ENCODE measurements at regions of chr11 and their contacts with region 1.

Region 1: DNA sequence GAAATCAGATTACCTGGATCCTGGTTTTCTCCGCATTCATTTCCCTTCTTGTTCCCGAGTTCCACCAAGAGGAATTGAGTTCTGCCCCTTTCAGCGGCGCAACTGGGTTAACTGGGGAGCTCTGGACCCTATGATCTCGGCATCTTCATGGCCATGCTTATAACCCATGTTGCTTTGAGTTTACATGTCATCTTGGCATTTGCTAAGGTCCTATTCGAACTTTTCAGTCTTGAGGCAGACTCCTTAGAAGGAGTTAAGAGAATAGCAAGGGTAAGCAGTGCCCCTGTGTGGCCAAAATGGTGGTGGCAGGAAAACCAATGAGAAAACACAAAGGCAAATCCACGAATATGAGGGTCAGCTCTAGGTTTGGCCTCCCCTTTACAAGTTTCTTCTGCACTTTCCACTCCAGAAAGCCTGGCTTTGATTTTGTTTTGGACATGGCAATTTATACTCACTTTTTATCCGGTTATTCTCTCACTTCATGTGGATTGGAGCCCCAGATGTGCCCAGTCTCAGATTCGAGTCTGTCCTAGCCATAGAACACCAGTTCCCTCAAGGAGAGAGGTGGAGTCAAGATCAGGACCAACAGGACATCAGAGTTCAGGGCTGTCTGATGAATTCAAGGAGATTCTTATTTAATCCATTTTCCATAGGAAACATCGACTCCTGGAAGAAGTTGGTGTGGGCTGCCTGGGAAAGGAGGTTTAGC is 55.3 kb upstream of the FBXO3 start:
- DNase-seq: no peak
- H3K4me3 ChIP-seq: peak overlapping the region; percentile 48 to 58 (median 54)
- H3K27ac ChIP-seq: no peak overlapping the region
- H3K4me1 ChIP-seq: peaks cover 7 to 16% (median 10%) of the 10 kb centered on the region in 4 donors
- H3K27me3 ChIP-seq: peaks cover 0 to 79% (median 16%) of the 10 kb centered on the region in 4 donors
- CTCF ChIP-seq: peak; percentile 70 to 83 (median 79)
- EP300 ChIP-seq: no peak
- POLR2A ChIP-seq: no peak

Region 2: GRCh38 chr11:33808228-33808828 is 21.3 kb before region 1 on chr11:
- intact Hi-C with region 1: loop called (anchors 2 kb)
- DNase-seq: no peak
- H3K4me3 ChIP-seq: no peak overlapping the region
- H3K27ac ChIP-seq: no peak overlapping the region
- H3K4me1 ChIP-seq: no peaks in the 10 kb centered on the region
- H3K27me3 ChIP-seq: peaks cover 0 to 6% (median 0%) of the 10 kb centered on the region in 4 donors
- CTCF ChIP-seq: peak; percentile 87 to 94 (median 90)
- EP300 ChIP-seq: no peak
- POLR2A ChIP-seq: no peak

Region 3: DNA sequence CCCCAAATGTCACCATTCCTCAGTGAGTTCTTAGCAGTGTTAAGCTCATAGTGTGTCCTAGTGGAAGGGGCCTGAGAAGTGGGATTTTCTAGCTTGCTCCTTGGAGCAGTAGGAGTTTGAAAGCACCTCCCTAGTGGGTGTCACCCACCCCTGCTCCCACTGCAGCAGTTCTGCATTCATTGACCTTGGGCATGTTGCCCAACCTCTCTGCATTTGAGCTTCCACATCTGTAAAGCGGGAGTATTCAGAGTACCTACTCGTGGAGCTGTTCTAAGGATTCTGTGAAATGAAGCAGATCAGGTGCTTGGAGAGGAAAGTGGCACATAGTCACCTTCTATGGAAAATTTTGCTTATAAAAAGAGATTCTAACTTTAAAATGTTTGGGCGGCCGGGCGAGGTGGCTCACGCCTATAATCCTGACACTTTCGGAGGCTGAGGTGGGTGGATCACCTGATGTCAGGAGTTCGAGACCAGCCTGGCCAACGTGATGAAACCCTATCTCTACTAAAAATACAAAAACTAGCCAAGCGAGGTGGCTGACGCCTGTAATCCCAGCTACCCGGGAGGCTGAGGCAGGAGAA is 45.4 kb after region 1 on chr11:
- intact Hi-C with region 1: no loop called
- DNase-seq: no peak
- H3K4me3 ChIP-seq: no peak overlapping the region
- H3K27ac ChIP-seq: no peak overlapping the region
- H3K4me1 ChIP-seq: peaks cover 9 to 17% (median 14%) of the 10 kb centered on the region in 4 donors
- H3K27me3 ChIP-seq: peaks cover 0 to 47% (median 6%) of the 10 kb centered on the region in 4 donors
- CTCF ChIP-seq: no peak
- EP300 ChIP-seq: no peak
- POLR2A ChIP-seq: no peak